Activated CD4-positive, alpha-beta memory T cell treated with anti-CD3 and anti-CD28 coated beads, Interleukin-2, amount 10 ng/mL, durations not matched to agents 7 days and 5 days (primary cell): ENCODE measurements at regions of chr3 and their contacts with region 1.

Region 1: GRCh38 chr3:124048931-124049798 is 57.2 kb upstream of the ROPN1 start:
- DNase-seq: no peak
- H3K4me3 Mint-ChIP-seq: no peak overlapping the region
- H3K27ac Mint-ChIP-seq: no peak overlapping the region
- H3K4me1 Mint-ChIP-seq: no peaks in the 10 kb centered on the region
- H3K27me3 Mint-ChIP-seq: peaks cover 26% of the 10 kb centered on the region

Region 2: DNA sequence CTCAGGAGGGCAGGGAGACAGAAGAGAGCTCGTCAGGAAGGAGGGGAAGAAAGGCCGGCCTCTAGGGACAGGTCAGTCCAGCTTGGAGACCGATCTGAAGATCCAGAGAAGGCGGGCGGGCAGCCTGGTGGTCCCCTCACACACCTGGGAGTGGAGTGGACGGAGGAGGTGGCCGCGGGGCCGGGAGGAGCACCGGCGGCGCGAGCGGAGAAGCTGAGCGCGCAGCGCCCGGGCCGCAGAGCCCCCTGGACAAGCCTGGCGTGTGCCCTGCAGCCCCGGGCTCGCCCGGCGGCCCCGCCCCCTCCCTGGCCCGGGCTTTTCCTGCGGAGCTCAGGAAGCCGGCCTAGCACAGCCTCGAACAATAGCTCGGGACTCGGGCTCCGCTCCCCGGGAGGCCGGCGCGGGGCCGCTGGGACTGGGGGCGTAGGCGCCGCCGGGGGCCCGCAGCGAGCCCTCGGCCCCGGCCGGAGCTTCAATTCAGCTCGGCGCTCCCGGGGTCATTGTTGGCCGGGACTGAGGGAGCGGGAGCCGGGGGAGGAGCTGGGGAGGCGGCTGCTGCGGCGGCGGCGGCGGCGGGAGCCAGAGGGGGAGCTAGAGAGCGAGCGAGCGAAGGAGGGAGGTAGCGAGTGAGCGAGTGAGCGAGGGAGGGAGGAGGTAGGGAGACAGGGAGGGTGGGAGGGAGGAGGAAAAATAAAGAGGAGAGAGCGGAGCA is 16.4 kb before region 1 on chr3:
- CTCF ChIA-PET with region 1: interaction called, 10 read pairs
- POLR2A ChIA-PET with region 1: no interaction called
- DNase-seq: peak; percentile 69
- H3K4me3 Mint-ChIP-seq: peak overlapping the region; percentile 49
- H3K27ac Mint-ChIP-seq: no peak overlapping the region
- H3K4me1 Mint-ChIP-seq: peaks cover 15% of the 10 kb centered on the region
- H3K27me3 Mint-ChIP-seq: peaks cover 47% of the 10 kb centered on the region